ENCODE measurements at regions of chr15 and their contacts with region 1.

Region 1: GRCh38 chr15:78415286-78415685 is 22.7 kb upstream of the IREB2 start:
- DNase-seq: no peak
- H3K4me3 ChIP-seq: no peak overlapping the region
- CTCF ChIP-seq: peak; percentile 43

Region 2: GRCh38 chr15:78469031-78469430 is 53.7 kb after region 1 on chr15:
- in situ Hi-C with region 1: no loop called
- DNase-seq: no peak
- H3K4me3 ChIP-seq: no peak overlapping the region
- CTCF ChIP-seq: no peak

Region 3: GRCh38 chr15:78524230-78524629 is 108.9 kb after region 1 on chr15:
- in situ Hi-C with region 1: loop called (anchors 5 kb)
- DNase-seq: no peak
- H3K4me3 ChIP-seq: no peak overlapping the region
- CTCF ChIP-seq: no peak